PC-3 (cell line): ENCODE measurements at regions of chr11 and their contacts with region 1.

Region 1: GRCh38 chr11:30346068-30346688 is 23.3 kb downstream of the ARL14EP start:
- DNase-seq: peak; percentile 64
- ATAC-seq: 0 out of 2 replicates have a peak, but pooled peaks have one; percentile 29
- H3K4me3 ChIP-seq: no peak overlapping the region
- H3K27ac ChIP-seq: no peak overlapping the region
- H3K4me1 ChIP-seq: no peaks in the 10 kb centered on the region
- H3K27me3 ChIP-seq: peaks cover 2% of the 10 kb centered on the region; the same call in 1 of the 2 replicates
- CTCF ChIP-seq: peak; percentile 70

Region 2: DNA sequence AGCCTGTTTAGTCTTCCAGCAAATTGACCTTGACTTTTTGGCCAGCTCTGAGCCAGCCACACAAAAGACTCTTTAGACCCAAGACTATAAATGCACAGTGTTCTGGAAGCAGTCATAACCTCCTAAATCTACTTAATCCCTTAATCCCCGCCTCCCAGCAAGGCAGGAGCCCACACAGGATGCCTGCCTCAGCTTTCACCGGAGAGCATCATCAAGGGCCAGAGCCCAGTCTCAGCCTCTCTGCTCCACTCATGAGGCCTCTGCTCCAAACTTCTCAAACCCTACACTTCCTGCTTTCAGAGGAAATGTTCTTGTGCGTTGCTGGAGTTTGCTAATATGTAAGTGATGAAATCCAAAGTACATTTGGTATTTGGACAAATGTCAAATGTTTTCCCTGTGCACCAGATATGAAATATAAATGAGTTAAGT is 173.3 kb before region 1 on chr11:
- CTCF ChIA-PET with region 1: no interaction called
- POLR2A ChIA-PET with region 1: no interaction called
- intact Hi-C with region 1: no loop called
- DNase-seq: no peak
- ATAC-seq: no peak
- H3K4me3 ChIP-seq: no peak overlapping the region
- H3K27ac ChIP-seq: no peak overlapping the region
- H3K4me1 ChIP-seq: no peaks in the 10 kb centered on the region
- H3K27me3 ChIP-seq: no peaks in the 10 kb centered on the region
- CTCF ChIP-seq: no peak

Region 3: GRCh38 chr11:30855383-30856006 is 509.3 kb after region 1 on chr11:
- CTCF ChIA-PET with region 1: no interaction called
- POLR2A ChIA-PET with region 1: no interaction called
- intact Hi-C with region 1: loop called (anchors 1 kb)
- DNase-seq: peak; percentile 25
- ATAC-seq: no peak
- H3K4me3 ChIP-seq: no peak overlapping the region
- H3K27ac ChIP-seq: no peak overlapping the region
- H3K4me1 ChIP-seq: no peaks in the 10 kb centered on the region
- H3K27me3 ChIP-seq: no peaks in the 10 kb centered on the region
- CTCF ChIP-seq: peak; percentile 53

Region 4: DNA sequence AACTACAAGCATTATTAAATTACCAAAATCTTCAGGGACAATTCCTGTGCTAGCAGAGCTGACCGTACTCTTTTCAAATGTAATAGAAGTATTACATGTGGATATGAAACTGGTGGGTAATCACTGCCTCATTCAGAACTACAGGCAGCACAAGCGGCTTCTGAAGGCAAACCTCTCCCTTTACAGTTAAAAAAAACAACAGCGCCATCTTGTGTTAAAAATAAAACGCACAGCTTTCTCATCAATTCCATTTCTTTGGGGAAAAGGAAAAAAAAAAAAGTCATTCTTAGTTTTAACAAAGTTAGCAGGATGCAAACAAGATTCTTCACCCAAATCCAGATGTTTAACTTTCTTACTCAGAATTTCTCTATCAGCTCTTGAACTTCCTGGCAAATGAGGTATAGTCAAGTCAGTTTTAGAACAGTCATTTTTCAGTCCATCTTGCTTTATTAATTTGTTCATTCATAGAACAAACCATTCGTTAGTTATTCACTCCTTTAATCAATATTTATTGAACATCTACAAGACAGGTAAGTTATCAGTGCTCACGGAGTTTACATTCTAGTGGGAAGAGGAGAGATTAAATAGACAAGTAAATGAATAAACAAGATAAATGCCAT is 571.8 kb after region 1 on chr11:
- CTCF ChIA-PET with region 1: no interaction called
- POLR2A ChIA-PET with region 1: no interaction called
- intact Hi-C with region 1: loop called (anchors 5 kb)
- DNase-seq: peak; percentile 69
- ATAC-seq: peak; percentile 53; the same call in 1 of the 2 replicates
- H3K4me3 ChIP-seq: no peak overlapping the region
- H3K27ac ChIP-seq: no peak overlapping the region
- H3K4me1 ChIP-seq: no peaks in the 10 kb centered on the region
- H3K27me3 ChIP-seq: no peaks in the 10 kb centered on the region; the same call in 1 of the 2 replicates
- CTCF ChIP-seq: peak; percentile 73